Body of pancreas (tissue), 4 donors: ENCODE measurements at regions of chr4 and their contacts with region 1.

Region 1: GRCh38 chr4:38179690-38180377 is 219.6 kb downstream of the PTTG2 start:
- DNase-seq: peak; percentile 84 to 90 (median 88)
- ATAC-seq: peak; percentile 76
- H3K4me3 ChIP-seq: no peak overlapping the region
- H3K27ac ChIP-seq: peak overlapping the region in 3 of 4 donors; percentile 22 to 92 (median 29)
- H3K4me1 ChIP-seq: peaks cover 24% of the 10 kb centered on the region
- H3K27me3 ChIP-seq: no peaks in the 10 kb centered on the region
- CTCF ChIP-seq: peak; percentile 82 to 97 (median 95)
- POLR2A ChIP-seq: no peak

Region 2: DNA sequence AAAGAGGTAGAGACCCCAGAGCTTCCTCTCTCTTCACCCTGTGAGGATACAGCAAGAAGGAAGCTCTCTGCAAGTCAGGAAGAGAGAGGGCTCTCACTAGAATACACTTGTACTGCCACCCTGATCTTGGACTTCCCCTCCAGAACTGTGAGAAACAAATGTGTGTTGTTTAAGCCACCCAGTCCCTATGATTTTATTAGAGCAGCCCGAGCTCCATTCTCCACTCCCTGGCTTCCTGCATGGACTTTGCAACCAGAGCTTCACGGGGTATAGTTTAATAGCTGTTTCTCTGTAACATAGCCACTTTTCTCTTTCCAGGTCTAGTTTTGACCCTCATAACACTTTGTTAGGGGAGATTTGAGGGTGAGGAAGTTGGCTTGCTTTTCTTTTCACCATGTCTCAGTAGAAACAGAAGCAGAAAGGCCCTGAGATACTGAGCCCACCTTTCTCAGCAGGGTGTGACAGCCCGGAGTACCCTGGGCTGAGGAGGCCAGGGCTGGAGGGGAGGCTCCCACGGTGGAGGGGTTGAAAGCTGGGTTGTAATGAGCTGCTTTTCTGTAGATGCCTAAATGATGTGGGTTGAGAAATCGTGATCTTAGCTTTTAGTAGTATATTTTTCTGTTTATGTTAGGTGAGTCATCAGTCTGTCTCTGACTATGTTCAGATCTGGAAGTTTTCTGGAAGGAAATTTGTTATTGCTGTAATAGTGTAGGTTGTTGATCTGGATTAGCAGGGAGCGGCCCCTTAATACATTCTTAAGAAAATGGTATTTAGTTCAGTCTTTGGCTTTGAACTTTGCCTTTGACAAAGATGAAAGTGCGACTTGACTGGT is 101.0 kb before region 1 on chr4:
- intact Hi-C with region 1: loop called (anchors 10 kb)
- DNase-seq: no peak
- ATAC-seq: no peak
- H3K4me3 ChIP-seq: no peak overlapping the region
- H3K27ac ChIP-seq: peak overlapping the region; percentile 40 to 74 (median 52)
- H3K4me1 ChIP-seq: peaks cover 5% of the 10 kb centered on the region
- H3K27me3 ChIP-seq: no peaks in the 10 kb centered on the region
- CTCF ChIP-seq: no peak
- POLR2A ChIP-seq: no peak

Region 3: GRCh38 chr4:38306482-38307071 is 126.7 kb after region 1 on chr4:
- intact Hi-C with region 1: loop called (anchors 10 kb)
- DNase-seq: no peak
- ATAC-seq: no peak
- H3K4me3 ChIP-seq: no peak overlapping the region
- H3K27ac ChIP-seq: no peak overlapping the region
- H3K4me1 ChIP-seq: no peaks in the 10 kb centered on the region
- H3K27me3 ChIP-seq: no peaks in the 10 kb centered on the region
- CTCF ChIP-seq: no peak
- POLR2A ChIP-seq: no peak